ENCODE measurements at regions of chrX and their contacts with region 1.

Region 1: DNA sequence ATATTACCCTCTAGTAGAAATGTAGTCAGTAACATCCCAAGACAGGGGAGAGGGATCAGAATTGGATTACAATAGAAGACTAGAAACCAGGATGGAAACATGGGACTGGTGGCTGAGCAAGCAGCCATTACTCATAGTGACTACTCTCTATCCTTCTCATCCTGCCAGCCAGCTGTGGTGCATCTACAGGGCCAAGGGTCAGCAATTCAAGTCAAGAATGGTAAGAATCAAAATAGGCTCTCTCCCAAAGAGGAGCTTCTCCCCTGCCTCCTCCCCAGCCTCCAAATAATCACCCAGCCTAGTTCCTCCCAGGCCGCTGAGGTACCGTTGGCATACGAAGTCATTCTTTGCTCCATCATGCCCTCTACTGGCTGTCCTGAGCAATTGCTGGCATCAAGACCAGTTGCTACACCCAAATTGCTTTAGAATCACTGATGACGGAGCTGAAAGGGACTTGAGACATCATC is 19.4 kb downstream of the AWAT2 start:
- DNase-seq: peak; percentile 58
- ATAC-seq: peak; percentile 61
- H3K4me3 Mint-ChIP-seq: no peak overlapping the region
- H3K27ac Mint-ChIP-seq: no peak overlapping the region
- H3K4me1 Mint-ChIP-seq: peaks cover 18% of the 10 kb centered on the region
- H3K27me3 Mint-ChIP-seq: no peaks in the 10 kb centered on the region

Region 2: GRCh38 chrX:69412661-69413060 is 617.7 kb before region 1 on chrX:
- CTCF ChIA-PET with region 1: no interaction called
- POLR2A ChIA-PET with region 1: no interaction called
- DNase-seq: no peak
- ATAC-seq: no peak
- H3K4me3 Mint-ChIP-seq: no peak overlapping the region
- H3K27ac Mint-ChIP-seq: no peak overlapping the region
- H3K4me1 Mint-ChIP-seq: no peaks in the 10 kb centered on the region
- H3K27me3 Mint-ChIP-seq: no peaks in the 10 kb centered on the region

Region 3: GRCh38 chrX:69538321-69538876 is 491.9 kb before region 1 on chrX:
- CTCF ChIA-PET with region 1: interaction called, 22 read pairs
- POLR2A ChIA-PET with region 1: no interaction called
- DNase-seq: peak; percentile 72
- ATAC-seq: peak; percentile 92
- H3K4me3 Mint-ChIP-seq: peak overlapping the region; percentile 22
- H3K27ac Mint-ChIP-seq: no peak overlapping the region
- H3K4me1 Mint-ChIP-seq: peaks cover 14% of the 10 kb centered on the region
- H3K27me3 Mint-ChIP-seq: peaks cover 2% of the 10 kb centered on the region

Region 4: DNA sequence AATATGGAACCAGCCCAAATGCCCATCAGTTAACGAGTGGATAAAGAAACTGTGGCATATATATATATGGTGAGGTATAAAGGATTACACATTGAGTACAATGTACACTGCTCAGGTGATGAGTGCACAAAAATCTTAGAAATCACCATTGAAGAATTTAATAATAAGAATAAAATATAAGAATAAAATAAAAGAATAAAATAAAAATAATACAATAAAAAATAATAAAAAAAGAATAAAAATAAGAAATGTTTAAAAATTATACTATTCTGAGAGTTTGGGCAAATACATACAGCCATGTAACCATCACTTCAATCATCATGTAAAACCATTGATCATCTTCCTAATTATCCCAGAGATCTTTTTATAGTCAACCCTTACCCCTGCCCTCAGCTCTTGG is 154.1 kb before region 1 on chrX:
- CTCF ChIA-PET with region 1: no interaction called
- POLR2A ChIA-PET with region 1: no interaction called
- DNase-seq: no peak
- ATAC-seq: no peak
- H3K4me3 Mint-ChIP-seq: no peak overlapping the region
- H3K27ac Mint-ChIP-seq: no peak overlapping the region
- H3K4me1 Mint-ChIP-seq: no peaks in the 10 kb centered on the region
- H3K27me3 Mint-ChIP-seq: no peaks in the 10 kb centered on the region

Region 5: GRCh38 chrX:70046978-70047377 is 16.6 kb after region 1 on chrX:
- CTCF ChIA-PET with region 1: no interaction called
- POLR2A ChIA-PET with region 1: no interaction called
- DNase-seq: no peak
- ATAC-seq: no peak
- H3K4me3 Mint-ChIP-seq: no peak overlapping the region
- H3K27ac Mint-ChIP-seq: no peak overlapping the region
- H3K4me1 Mint-ChIP-seq: no peaks in the 10 kb centered on the region
- H3K27me3 Mint-ChIP-seq: peaks cover 2% of the 10 kb centered on the region

Region 6: GRCh38 chrX:70096052-70096451 is 65.7 kb after region 1 on chrX:
- CTCF ChIA-PET with region 1: interaction called, 20 read pairs
- POLR2A ChIA-PET with region 1: no interaction called
- DNase-seq: no peak
- ATAC-seq: no peak
- H3K4me3 Mint-ChIP-seq: no peak overlapping the region
- H3K27ac Mint-ChIP-seq: no peak overlapping the region
- H3K4me1 Mint-ChIP-seq: no peaks in the 10 kb centered on the region
- H3K27me3 Mint-ChIP-seq: peaks cover 2% of the 10 kb centered on the region

Region 7: DNA sequence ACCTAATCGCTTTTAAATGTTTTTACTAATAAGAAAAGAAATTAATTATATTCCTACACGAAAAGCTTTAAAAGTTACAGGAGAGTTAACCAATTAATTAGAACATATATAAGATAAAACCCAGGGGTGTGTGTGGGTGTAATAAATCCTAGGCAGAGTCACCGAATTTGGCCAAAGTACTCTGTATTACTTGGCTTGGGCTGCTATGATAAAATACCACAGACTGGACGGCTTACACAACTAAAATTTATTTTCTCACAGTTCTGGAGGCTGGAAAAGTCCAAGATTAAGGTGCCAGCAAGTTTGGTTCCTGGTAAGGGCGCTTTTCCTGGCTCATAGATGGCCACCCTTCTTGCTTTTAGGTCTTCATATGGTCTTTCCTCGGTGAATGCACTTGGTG is 214.5 kb after region 1 on chrX:
- CTCF ChIA-PET with region 1: no interaction called
- POLR2A ChIA-PET with region 1: no interaction called
- DNase-seq: no peak
- ATAC-seq: no peak
- H3K4me3 Mint-ChIP-seq: no peak overlapping the region
- H3K27ac Mint-ChIP-seq: no peak overlapping the region
- H3K4me1 Mint-ChIP-seq: no peaks in the 10 kb centered on the region
- H3K27me3 Mint-ChIP-seq: no peaks in the 10 kb centered on the region